PC-9 (cell line): ENCODE measurements at regions of chr15 and their contacts with region 1.

Region 1: DNA sequence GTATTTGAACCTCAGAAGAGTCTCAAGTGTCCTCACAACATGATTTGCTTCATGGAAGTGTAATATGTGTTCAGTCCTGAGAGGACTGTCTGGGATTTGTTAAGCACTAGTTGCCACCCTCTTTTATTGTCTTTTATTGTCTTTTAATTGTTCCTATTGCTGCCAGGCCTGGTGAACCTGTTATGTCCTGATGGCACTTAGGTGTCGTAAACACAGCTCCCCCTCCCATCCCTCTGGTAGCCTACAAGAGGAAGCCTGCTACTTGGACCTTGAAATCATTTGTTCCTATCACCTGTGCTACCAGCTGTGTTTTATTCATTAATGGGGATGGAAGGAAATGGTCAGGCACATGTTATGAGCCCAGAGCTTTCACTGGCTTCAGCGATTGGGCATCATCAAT is 19.3 kb downstream of the CCNB2 start:
- DNase-seq: no peak
- H3K4me3 ChIP-seq: no peak overlapping the region
- H3K27ac ChIP-seq: no peak overlapping the region
- H3K4me1 ChIP-seq: no peaks in the 10 kb centered on the region
- H3K27me3 ChIP-seq: no peaks in the 10 kb centered on the region
- CTCF ChIP-seq: no peak

Region 2: GRCh38 chr15:59028387-59028955 is 95.8 kb before region 1 on chr15:
- CTCF ChIA-PET with region 1: interaction called, 13 read pairs
- POLR2A ChIA-PET with region 1: interaction called, 10 read pairs
- intact Hi-C with region 1: no loop called
- DNase-seq: no peak
- H3K4me3 ChIP-seq: no peak overlapping the region
- H3K27ac ChIP-seq: no peak overlapping the region
- H3K4me1 ChIP-seq: no peaks in the 10 kb centered on the region
- H3K27me3 ChIP-seq: no peaks in the 10 kb centered on the region
- CTCF ChIP-seq: no peak